Common myeloid progenitor, CD34-positive (primary cell): ENCODE measurements at regions of chr7 and their contacts with region 1.

Region 1: DNA sequence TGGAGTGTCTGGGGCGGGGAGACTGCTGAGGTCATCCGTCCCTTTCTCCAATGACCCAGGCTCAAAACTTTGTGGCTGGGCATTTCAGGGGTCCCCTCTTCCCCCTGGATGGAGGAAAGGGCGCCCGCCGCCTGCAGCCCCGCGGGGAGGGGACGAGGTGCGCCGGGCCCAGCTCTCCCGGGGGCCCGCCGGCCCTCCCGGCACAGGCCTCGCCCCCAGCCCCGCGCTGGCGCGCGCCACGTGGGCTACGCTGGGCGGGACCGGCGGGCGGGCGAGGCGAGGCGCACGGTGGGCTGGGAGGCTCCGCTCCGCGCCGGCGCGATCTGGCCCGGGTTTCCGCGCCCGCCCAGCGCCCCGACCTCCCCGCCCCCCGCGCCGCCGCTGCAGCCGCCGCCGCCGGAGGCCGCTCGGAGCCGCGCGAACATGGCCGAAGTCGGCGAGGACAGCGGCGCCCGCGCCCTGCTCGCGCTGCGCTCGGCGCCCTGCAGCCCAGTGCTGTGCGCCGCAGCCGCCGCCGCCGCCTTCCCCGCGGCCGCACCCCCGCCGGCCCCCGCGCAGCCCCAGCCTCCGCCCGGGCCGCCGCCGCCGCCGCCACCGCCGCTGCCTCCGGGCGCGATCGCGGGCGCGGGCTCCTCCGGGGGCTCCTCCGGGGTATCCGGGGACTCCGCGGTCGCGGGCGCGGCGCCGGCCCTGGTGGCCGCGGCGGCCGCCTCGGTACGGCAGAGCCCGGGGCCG is at the start of gene FOXK1:
- DNase-seq: peak; percentile 64 to 82 (median 81)
- H3K4me3 ChIP-seq: peak within 1 kb of the TSS; percentile 62 to 96 (median 83)
- H3K27ac ChIP-seq: peak within 1 kb of the TSS; percentile 75 to 91
- H3K4me1 ChIP-seq: peaks cover 0 to 26% (median 24%) of the 10 kb centered on the region in 4 experiments
- H3K27me3 ChIP-seq: no peaks in the 10 kb centered on the region

Region 2: DNA sequence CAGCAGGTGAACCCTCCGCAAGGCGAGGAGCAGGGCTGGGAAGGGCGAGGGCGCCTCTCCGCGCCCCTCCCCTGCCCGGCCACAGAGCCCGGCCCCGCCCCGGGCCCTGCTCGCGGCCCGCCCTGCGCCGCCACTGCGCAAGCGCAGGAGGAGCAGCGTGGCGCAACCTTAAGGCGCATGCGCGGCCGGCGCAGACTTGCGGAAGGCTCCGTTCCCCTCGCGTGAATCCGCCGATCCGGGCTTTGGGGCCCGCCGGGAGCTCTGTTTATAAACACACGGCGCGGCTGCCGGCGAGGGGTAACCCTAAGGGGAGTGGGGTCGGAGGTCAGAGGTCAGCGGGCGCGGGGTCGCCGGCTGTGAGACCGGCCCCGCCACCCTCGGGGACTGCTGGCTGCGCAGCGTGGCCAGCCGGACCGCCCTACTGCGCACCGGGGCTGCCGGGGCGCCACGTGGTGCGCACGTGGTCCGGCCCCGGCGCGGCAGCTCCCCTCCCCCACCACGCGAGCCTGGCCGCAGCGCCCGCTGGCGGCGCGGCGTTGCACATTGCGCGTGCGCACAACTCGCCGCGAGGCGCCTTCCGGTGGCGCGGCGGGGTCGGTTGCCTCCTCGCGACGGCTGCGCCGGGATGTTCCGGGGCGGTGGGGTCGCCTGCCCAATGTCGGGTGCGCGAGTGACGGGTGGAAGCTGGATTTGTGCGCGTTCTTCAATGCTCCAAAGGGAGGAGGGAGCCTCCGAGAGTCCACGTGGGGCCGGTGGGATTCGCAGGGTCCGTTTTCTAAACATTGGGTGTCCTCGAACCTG is 40.2 kb before region 1 on chr7:
- CTCF ChIA-PET with region 1: interaction called, 23 read pairs
- POLR2A ChIA-PET with region 1: interaction called, 14 read pairs
- DNase-seq: peak; percentile 94 to 98 (median 97)
- H3K4me3 ChIP-seq: peak overlapping the region; percentile 55 to 91 (median 77)
- H3K27ac ChIP-seq: peak overlapping the region; percentile 70 to 88
- H3K4me1 ChIP-seq: peaks cover 3 to 14% (median 12%) of the 10 kb centered on the region in 4 experiments
- H3K27me3 ChIP-seq: no peaks in the 10 kb centered on the region